IMR-90 (cell line): ENCODE measurements at regions of chr14 and their contacts with region 1.

Region 1: GRCh38 chr14:51395361-51395849 is 155.4 kb downstream of the TMX1 start:
- DNase-seq: peak; percentile 89
- ATAC-seq: peak; percentile 61
- H3K4me3 ChIP-seq: no peak overlapping the region
- H3K27ac ChIP-seq: peak overlapping the region; percentile 91
- H3K4me1 ChIP-seq: peaks cover 27% of the 10 kb centered on the region
- H3K27me3 ChIP-seq: no peaks in the 10 kb centered on the region
- CTCF ChIP-seq: 0 out of 2 replicates have a peak, but pooled peaks have one; percentile 19
- POLR2A ChIP-seq: no peak
- RAD21 ChIP-seq: peak; percentile 28; the same call in 1 of the 2 replicates

Region 2: DNA sequence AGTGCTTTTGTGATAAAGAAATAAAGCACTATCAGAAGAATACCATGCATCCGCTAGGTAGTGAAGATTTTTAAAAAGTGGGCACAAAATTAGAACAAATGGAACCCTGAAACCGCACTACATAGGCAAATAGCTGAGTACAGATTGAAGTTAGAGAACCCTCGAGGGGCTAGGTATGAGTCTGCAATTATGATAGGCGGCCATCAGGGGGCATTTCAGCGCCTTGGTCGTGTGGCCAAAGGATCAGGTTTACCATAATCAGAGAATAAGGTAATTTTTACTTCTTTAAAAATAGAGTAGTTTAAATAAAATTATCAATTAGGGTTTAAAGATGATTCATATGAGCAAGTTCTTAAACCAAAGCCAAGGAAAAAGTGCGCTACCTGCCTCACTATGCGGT is 25.6 kb before region 1 on chr14:
- CTCF ChIA-PET with region 1: no interaction called
- POLR2A ChIA-PET with region 1: no interaction called
- dilution Hi-C with region 1: no loop called
- in situ Hi-C with region 1: no loop called
- intact Hi-C with region 1: loop called (anchors 2 kb)
- DNase-seq: no peak
- ATAC-seq: no peak
- H3K4me3 ChIP-seq: no peak overlapping the region
- H3K27ac ChIP-seq: no peak overlapping the region
- H3K4me1 ChIP-seq: peaks cover 9% of the 10 kb centered on the region
- H3K27me3 ChIP-seq: no peaks in the 10 kb centered on the region
- CTCF ChIP-seq: no peak
- POLR2A ChIP-seq: no peak
- RAD21 ChIP-seq: peak; percentile 16; the same call in 1 of the 2 replicates

Region 3: DNA sequence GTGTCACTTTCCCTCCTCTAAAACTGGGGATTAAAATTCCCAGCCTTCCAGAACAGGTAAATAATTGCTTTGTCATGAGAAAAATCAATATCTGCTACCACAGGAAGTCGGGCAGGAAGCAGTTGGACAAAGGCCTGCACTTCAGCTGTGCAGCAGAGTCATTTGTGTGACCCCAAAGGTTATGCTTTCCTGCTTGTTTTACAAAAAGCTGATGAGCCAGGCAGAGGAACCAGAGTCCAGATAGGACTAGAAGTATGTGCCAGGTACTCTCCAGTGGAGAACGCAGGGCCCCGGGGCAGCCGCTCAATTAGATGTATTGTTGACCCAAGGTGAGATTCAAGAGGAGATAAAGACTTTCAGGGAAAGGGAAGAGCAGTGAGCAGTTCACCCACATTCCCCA is 139.2 kb after region 1 on chr14:
- CTCF ChIA-PET with region 1: interaction called, 3 read pairs
- POLR2A ChIA-PET with region 1: interaction called, 5 read pairs
- dilution Hi-C with region 1: no loop called
- in situ Hi-C with region 1: no loop called
- intact Hi-C with region 1: loop called (anchors 5 kb)
- DNase-seq: peak; percentile 67
- ATAC-seq: no peak
- H3K4me3 ChIP-seq: no peak overlapping the region
- H3K27ac ChIP-seq: no peak overlapping the region
- H3K4me1 ChIP-seq: peaks cover 15% of the 10 kb centered on the region
- H3K27me3 ChIP-seq: no peaks in the 10 kb centered on the region
- CTCF ChIP-seq: no peak
- POLR2A ChIP-seq: no peak
- RAD21 ChIP-seq: no peak

Region 4: GRCh38 chr14:51554953-51555352 is 159.5 kb after region 1 on chr14:
- CTCF ChIA-PET with region 1: no interaction called
- POLR2A ChIA-PET with region 1: interaction called, 14 read pairs
- dilution Hi-C with region 1: no loop called
- in situ Hi-C with region 1: no loop called
- intact Hi-C with region 1: no loop called
- DNase-seq: peak; percentile 72
- ATAC-seq: peak; percentile 36
- H3K4me3 ChIP-seq: peak overlapping the region; percentile 19; the same call in 1 of the 2 replicates
- H3K27ac ChIP-seq: peak overlapping the region; percentile 89
- H3K4me1 ChIP-seq: peaks cover 20% of the 10 kb centered on the region
- H3K27me3 ChIP-seq: no peaks in the 10 kb centered on the region
- CTCF ChIP-seq: peak; percentile 33
- POLR2A ChIP-seq: no peak
- RAD21 ChIP-seq: peak; percentile 53

Region 5: DNA sequence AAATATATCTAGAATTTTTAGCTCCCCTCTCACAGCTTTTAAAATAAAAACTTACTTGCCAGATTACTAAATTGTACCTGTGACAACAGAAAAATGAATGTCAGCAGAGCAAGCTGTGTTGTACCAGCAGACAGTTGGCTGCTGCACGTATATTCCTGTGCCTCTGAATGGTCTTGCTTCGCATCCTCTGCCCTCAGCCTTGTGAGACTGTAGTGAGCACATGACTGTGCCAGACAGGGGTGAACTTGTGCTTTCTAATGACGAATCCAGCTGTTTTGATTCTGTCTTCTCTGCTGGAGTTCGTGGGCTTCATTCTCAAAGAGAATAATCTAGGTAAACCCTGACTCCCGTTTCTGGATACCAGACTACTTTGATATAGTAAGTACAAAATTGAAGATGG is 198.0 kb after region 1 on chr14:
- CTCF ChIA-PET with region 1: no interaction called
- POLR2A ChIA-PET with region 1: no interaction called
- dilution Hi-C with region 1: no loop called
- in situ Hi-C with region 1: no loop called
- intact Hi-C with region 1: no loop called
- DNase-seq: no peak
- ATAC-seq: no peak
- H3K4me3 ChIP-seq: no peak overlapping the region
- H3K27ac ChIP-seq: no peak overlapping the region; the same call in 1 of the 2 replicates
- H3K4me1 ChIP-seq: peaks cover 12% of the 10 kb centered on the region
- H3K27me3 ChIP-seq: no peaks in the 10 kb centered on the region
- CTCF ChIP-seq: no peak
- POLR2A ChIP-seq: no peak
- RAD21 ChIP-seq: no peak

Region 6: GRCh38 chr14:51780006-51780692 is 384.7 kb after region 1 on chr14:
- CTCF ChIA-PET with region 1: interaction called, 3 read pairs
- POLR2A ChIA-PET with region 1: no interaction called
- dilution Hi-C with region 1: no loop called
- in situ Hi-C with region 1: no loop called
- intact Hi-C with region 1: loop called (anchors 10 kb)
- DNase-seq: peak; percentile 59
- ATAC-seq: peak; percentile 73
- H3K4me3 ChIP-seq: no peak overlapping the region
- H3K27ac ChIP-seq: no peak overlapping the region
- H3K4me1 ChIP-seq: peaks cover 2% of the 10 kb centered on the region; the same call in 1 of the 2 replicates
- H3K27me3 ChIP-seq: no peaks in the 10 kb centered on the region
- CTCF ChIP-seq: peak; percentile 71
- POLR2A ChIP-seq: no peak
- RAD21 ChIP-seq: peak; percentile 84